A549 (cell line): ENCODE measurements at regions of chr3 and their contacts with region 1.

Region 1: DNA sequence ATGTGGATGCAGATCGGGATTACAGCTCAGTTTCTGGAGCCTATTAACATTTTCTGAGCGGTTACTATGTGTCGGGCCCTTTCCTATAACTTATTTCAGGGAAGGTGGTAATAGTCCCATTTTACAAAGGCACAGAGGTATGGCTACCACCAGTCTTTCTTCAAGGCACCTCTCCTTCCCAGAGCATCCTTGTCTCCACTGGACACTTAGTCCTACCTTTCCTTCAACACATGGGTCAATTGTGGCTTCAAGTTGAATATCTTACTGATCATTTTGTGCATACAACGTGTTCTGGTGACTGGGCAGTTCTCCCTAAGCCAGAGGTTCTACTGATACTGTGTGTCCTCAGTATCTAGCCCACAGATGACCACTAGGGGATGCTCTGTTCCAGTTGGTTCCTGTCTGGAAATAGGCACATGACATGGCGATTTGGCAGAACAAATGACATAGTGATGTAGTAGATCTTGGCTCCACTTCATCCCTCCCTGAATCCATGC is 60.7 kb upstream of the CMTM8 start:
- DNase-seq: peak; percentile 67 to 91
- ATAC-seq: peak; percentile 96 to 98
- H3K4me3 ChIP-seq: no peak overlapping the region
- H3K27ac ChIP-seq: peak overlapping the region in 1 of 2 experiments; percentile 2; a peak in 1 of 6 replicates
- H3K4me1 ChIP-seq: peaks cover 5% of the 10 kb centered on the region; the same call in 1 of the 3 replicates
- CTCF ChIP-seq: peak; percentile 73
- EP300 ChIP-seq: no peak
- POLR2A ChIP-seq: no peak
- RAD21 ChIP-seq: peak; percentile 72 to 84; a peak in 4 of 5 replicates

Region 2: GRCh38 chr3:32154205-32154579 is 23.6 kb before region 1 on chr3:
- CTCF ChIA-PET with region 1: interaction called, 27 read pairs
- POLR2A ChIA-PET with region 1: no interaction called
- DNase-seq: peak in 1 of 2 experiments; percentile 18
- ATAC-seq: peak; percentile 84 to 95; a peak in 5 of 6 replicates
- H3K4me3 ChIP-seq: no peak overlapping the region
- H3K27ac ChIP-seq: no peak overlapping the region
- H3K4me1 ChIP-seq: no peaks in the 10 kb centered on the region
- CTCF ChIP-seq: peak; percentile 32; the same call in 2 of the 3 replicates
- EP300 ChIP-seq: no peak
- POLR2A ChIP-seq: no peak
- RAD21 ChIP-seq: peak; percentile 39 to 44

Region 3: DNA sequence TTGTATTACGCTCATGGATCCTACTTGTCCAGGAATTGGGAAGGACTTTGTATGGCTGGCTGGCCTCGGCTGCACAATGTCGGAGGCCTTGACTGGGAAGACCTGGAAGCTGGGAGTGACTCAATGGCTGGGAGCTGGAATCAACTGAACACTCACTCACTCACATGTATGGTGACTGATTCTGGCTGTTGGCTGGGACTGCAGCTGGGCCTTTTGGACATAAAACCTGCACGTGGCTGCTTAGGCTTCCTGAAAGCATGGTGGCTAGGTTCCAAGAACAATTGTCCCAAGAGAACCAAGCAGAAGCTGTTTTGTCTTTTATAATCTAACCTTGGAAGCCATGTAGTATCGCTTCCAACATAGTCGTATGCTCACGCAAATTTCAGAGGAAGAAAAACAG is 22.7 kb after region 1 on chr3:
- CTCF ChIA-PET with region 1: interaction called, 12 read pairs
- POLR2A ChIA-PET with region 1: no interaction called
- DNase-seq: no peak
- ATAC-seq: no peak; a peak in 1 of 6 replicates
- H3K4me3 ChIP-seq: no peak overlapping the region
- H3K27ac ChIP-seq: no peak overlapping the region
- H3K4me1 ChIP-seq: peaks cover 3% of the 10 kb centered on the region; the same call in 1 of the 3 replicates
- CTCF ChIP-seq: no peak
- EP300 ChIP-seq: no peak
- POLR2A ChIP-seq: no peak
- RAD21 ChIP-seq: no peak

Region 4: DNA sequence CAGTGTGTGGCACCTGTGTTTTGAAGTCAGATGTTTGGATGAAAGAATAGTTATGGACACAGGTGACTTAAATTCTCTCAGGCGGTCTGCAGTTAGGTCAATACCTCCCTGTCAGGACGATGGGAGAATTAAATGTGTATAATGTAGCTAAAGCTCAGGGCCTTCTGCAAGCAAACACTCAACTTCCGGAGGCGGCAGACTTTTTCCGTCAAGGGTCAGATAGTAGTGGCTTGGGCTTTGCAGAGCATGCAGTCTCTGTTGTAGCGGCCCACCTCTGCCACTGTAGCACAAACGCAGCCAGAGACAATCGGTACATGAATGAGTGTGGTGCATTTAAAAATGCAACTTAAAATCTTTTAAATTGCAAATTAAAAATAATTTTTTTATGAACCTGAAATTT is 108.1 kb after region 1 on chr3:
- CTCF ChIA-PET with region 1: interaction called, 40 read pairs
- POLR2A ChIA-PET with region 1: no interaction called
- DNase-seq: no peak
- ATAC-seq: no peak
- H3K4me3 ChIP-seq: no peak overlapping the region
- H3K27ac ChIP-seq: no peak overlapping the region
- H3K4me1 ChIP-seq: no peaks in the 10 kb centered on the region
- CTCF ChIP-seq: no peak
- EP300 ChIP-seq: no peak
- POLR2A ChIP-seq: no peak
- RAD21 ChIP-seq: no peak

Region 5: DNA sequence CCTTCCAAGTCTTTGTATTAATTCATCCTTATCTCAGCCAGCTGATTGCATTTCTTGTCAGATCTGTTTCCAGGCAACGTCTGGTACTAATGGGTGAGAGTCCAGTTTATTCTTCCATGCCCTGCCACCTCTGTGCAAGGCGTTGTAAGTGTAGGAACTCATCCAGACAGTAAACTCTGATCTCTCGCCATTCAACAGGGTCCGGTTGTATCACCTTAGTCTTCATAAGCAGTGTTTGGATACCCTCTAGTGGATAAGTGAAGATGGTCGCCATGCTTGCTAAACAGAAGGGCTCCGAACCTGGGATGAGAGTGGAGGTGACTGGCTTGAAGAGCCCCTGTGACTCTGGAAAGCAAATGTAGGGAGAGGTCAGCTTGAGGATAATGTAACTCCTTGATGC is 162.3 kb after region 1 on chr3:
- CTCF ChIA-PET with region 1: interaction called, 21 read pairs
- POLR2A ChIA-PET with region 1: no interaction called
- DNase-seq: peak; percentile 61 to 63
- ATAC-seq: peak; percentile 90 to 95
- H3K4me3 ChIP-seq: no peak overlapping the region
- H3K27ac ChIP-seq: no peak overlapping the region
- H3K4me1 ChIP-seq: no peaks in the 10 kb centered on the region
- CTCF ChIP-seq: peak; percentile 57
- EP300 ChIP-seq: no peak
- POLR2A ChIP-seq: no peak
- RAD21 ChIP-seq: peak; percentile 73 to 78